Heart left ventricle (tissue), 16 donors: ENCODE measurements at regions of chr18 and their contacts with region 1.

Region 1: GRCh38 chr18:26764628-26765027 is 100.9 kb downstream of the AQP4 start:
- DNase-seq: no peak
- ATAC-seq: no peak
- H3K4me3 ChIP-seq: no peak overlapping the region
- H3K27ac ChIP-seq: no peak overlapping the region
- H3K4me1 ChIP-seq: no peaks in the 10 kb centered on the region
- H3K27me3 ChIP-seq: no peaks in the 10 kb centered on the region
- CTCF ChIP-seq: no peak
- POLR2A ChIP-seq: no peak

Region 2: GRCh38 chr18:26621161-26622026 is 143.2 kb before region 1 on chr18:
- intact Hi-C with region 1: loop called in 2 of 10 experiments (anchors 5 kb)
- DNase-seq: peak in 3 of 5 donors; percentile 25 to 54 (median 33)
- ATAC-seq: peak in 3 of 4 donors; percentile 71 to 76 (median 75)
- H3K4me3 ChIP-seq: no peak overlapping the region
- H3K27ac ChIP-seq: no peak overlapping the region
- H3K4me1 ChIP-seq: peaks cover 0 to 2% (median 0%) of the 10 kb centered on the region in 12 donors
- H3K27me3 ChIP-seq: no peaks in the 10 kb centered on the region
- CTCF ChIP-seq: peak; percentile 49 to 70 (median 62)
- POLR2A ChIP-seq: no peak

Region 3: DNA sequence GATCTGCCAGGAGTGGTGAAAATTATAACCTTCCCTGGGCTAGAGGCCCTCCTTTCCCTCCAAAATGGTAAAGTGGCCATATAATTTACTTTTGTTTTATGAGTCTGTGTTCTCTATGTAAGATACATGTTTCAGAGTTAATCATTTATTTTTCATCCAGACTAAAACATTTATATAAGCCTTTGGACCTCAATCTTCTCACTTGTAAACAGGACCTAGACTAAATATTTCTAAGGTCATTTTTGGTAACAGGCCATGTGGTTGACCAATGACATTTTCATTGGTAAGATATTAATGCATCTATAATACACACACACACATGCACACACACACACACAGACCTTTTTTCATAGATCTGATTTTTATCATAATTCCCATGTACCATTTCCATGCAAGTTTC is 136.6 kb before region 1 on chr18:
- intact Hi-C with region 1: loop called in 1 of 10 experiments (anchors 5 kb)
- DNase-seq: no peak
- ATAC-seq: no peak
- H3K4me3 ChIP-seq: no peak overlapping the region
- H3K27ac ChIP-seq: no peak overlapping the region
- H3K4me1 ChIP-seq: no peaks in the 10 kb centered on the region
- H3K27me3 ChIP-seq: no peaks in the 10 kb centered on the region
- CTCF ChIP-seq: no peak
- POLR2A ChIP-seq: no peak

Region 4: DNA sequence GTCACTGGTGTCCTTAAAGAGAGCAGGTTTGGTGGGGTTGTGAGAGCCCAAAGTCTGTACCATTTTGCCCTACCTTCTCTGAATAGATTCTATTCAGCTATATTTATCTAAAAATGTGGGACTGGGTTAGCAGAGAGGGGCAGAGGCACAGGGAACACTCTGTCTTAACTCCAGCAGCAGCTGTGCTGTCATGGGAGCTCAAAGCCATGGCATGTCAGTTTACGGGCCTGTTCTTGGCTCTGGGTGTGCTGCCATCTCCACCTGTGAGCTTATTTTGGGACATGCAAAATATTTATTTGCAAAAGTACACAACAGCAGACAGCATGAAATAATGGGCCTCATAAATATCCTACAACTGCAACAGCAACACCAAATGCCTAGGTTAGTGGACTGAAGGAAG is 86.7 kb before region 1 on chr18:
- intact Hi-C with region 1: loop called in 1 of 10 experiments (anchors 10 kb)
- DNase-seq: no peak
- ATAC-seq: peak in 2 of 4 donors; percentile 36 to 87
- H3K4me3 ChIP-seq: no peak overlapping the region
- H3K27ac ChIP-seq: no peak overlapping the region
- H3K4me1 ChIP-seq: no peaks in the 10 kb centered on the region
- H3K27me3 ChIP-seq: no peaks in the 10 kb centered on the region
- CTCF ChIP-seq: no peak
- POLR2A ChIP-seq: no peak